Calu3 (cell line): ENCODE measurements at regions of chr3 and their contacts with region 1.

Region 1: GRCh38 chr3:167882067-167882667 is 146.6 kb downstream of the SERPINI1 start:
- DNase-seq: no peak
- H3K4me3 Mint-ChIP-seq: no peak overlapping the region
- H3K27ac Mint-ChIP-seq: no peak overlapping the region
- H3K4me1 Mint-ChIP-seq: peaks cover 19% of the 10 kb centered on the region
- H3K27me3 Mint-ChIP-seq: peaks cover 22% of the 10 kb centered on the region
- CTCF ChIP-seq: peak; percentile 73

Region 2: DNA sequence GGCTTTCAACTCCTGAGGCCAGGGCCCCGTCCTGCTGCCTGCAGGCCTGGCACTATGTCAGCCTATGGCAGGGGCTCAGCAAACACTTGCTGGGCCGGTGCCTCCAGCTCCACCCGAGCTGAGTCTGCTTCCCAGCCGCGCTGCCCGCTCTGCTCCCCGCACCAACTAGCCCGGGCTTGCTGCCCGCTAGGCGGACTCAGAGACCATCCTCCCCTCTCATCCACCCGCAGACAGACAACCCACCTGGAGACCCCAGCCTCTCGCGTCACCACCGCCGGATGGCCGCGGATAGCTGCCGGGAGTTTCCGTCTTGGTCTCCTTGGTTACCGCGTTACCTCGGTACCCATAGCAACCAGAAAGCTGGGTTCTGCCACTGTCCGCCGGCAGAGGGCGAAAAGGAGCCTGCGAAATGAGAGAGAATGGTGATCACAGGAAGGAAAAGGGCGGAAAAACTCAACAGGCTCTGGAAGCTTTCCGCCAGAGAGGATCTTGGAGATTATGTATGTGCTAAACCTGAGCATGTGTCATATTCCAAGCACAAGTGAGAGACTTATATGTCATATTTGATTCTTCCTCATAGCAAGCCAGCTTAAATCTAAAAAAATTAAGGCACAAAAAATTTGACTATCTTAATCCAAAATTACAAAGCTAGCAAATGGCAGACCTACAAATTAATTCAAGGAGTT is 502.0 kb before region 1 on chr3 and contains the start of gene ZBBX:
- CTCF ChIA-PET with region 1: interaction called, 25 read pairs
- intact Hi-C with region 1: loop called (anchors 1 kb)
- DNase-seq: peak; percentile 97
- H3K4me3 Mint-ChIP-seq: peak within 1 kb of the TSS; percentile 80
- H3K27ac Mint-ChIP-seq: peak within 1 kb of the TSS; percentile 62
- H3K4me1 Mint-ChIP-seq: no peaks in the 10 kb centered on the region
- H3K27me3 Mint-ChIP-seq: no peaks in the 10 kb centered on the region
- CTCF ChIP-seq: peak; percentile 98
- total RNA-seq, gene ZBBX: 0.49 and 0.57 TPM in 2 replicates

Region 3: GRCh38 chr3:167467848-167468611 is 414.1 kb before region 1 on chr3:
- CTCF ChIA-PET with region 1: no interaction called
- intact Hi-C with region 1: loop called (anchors 5 kb)
- DNase-seq: no peak
- H3K4me3 Mint-ChIP-seq: no peak overlapping the region
- H3K27ac Mint-ChIP-seq: no peak overlapping the region
- H3K4me1 Mint-ChIP-seq: no peaks in the 10 kb centered on the region
- H3K27me3 Mint-ChIP-seq: no peaks in the 10 kb centered on the region
- CTCF ChIP-seq: no peak

Region 4: GRCh38 chr3:167734498-167735232 is 147.5 kb before region 1 on chr3 and contains the start of gene PDCD10:
- CTCF ChIA-PET with region 1: interaction called, 13 read pairs
- intact Hi-C with region 1: no loop called
- DNase-seq: peak; percentile 99
- H3K4me3 Mint-ChIP-seq: no peak within 1 kb of the TSS
- H3K27ac Mint-ChIP-seq: no peak within 1 kb of the TSS
- H3K4me1 Mint-ChIP-seq: peaks cover 27% of the 10 kb centered on the region
- H3K27me3 Mint-ChIP-seq: no peaks in the 10 kb centered on the region
- CTCF ChIP-seq: no peak
- total RNA-seq, gene PDCD10: 117 and 120 TPM in 2 replicates

Region 5: GRCh38 chr3:167837466-167837865 is 44.7 kb before region 1 on chr3:
- CTCF ChIA-PET with region 1: interaction called, 7 read pairs
- intact Hi-C with region 1: loop called (anchors 1 kb)
- DNase-seq: no peak
- H3K4me3 Mint-ChIP-seq: no peak overlapping the region
- H3K27ac Mint-ChIP-seq: no peak overlapping the region
- H3K4me1 Mint-ChIP-seq: no peaks in the 10 kb centered on the region
- H3K27me3 Mint-ChIP-seq: no peaks in the 10 kb centered on the region
- CTCF ChIP-seq: no peak

Region 6: DNA sequence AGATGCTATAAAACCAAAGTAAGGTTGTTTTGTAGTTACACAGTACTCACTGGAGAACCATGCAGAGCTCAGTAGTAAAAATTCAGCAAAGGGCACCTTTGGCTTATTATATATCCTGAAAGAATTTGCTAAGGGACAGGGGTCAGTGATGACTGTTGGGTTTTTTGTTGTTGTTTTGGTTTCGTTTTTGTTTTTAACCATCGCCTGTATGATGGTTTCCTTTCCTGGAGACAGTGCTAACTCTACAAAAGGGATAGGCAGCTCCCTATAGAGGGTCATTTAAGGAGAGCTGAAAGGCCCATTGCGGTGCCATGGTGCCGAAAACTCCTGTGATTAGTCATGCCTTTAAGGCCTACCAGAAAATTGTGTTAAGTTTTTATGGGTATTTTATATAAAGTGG is 331.8 kb after region 1 on chr3:
- CTCF ChIA-PET with region 1: no interaction called
- intact Hi-C with region 1: no loop called
- DNase-seq: no peak
- H3K4me3 Mint-ChIP-seq: no peak overlapping the region
- H3K27ac Mint-ChIP-seq: no peak overlapping the region
- H3K4me1 Mint-ChIP-seq: no peaks in the 10 kb centered on the region
- H3K27me3 Mint-ChIP-seq: no peaks in the 10 kb centered on the region
- CTCF ChIP-seq: no peak